WTC11 (cell line): ENCODE measurements at regions of chr11 and their contacts with region 1.

Region 1: GRCh38 chr11:126480410-126481302 is 125.2 kb downstream of the ST3GAL4 start:
- DNase-seq: peak; percentile 77
- ATAC-seq: peak; percentile 80
- H3K4me3 Mint-ChIP-seq: peak overlapping the region; percentile 34; the same call in 1 of the 2 replicates
- H3K27ac Mint-ChIP-seq: peak overlapping the region; percentile 81; the same call in 1 of the 2 replicates
- H3K4me1 Mint-ChIP-seq: peaks cover 11% of the 10 kb centered on the region
- H3K27me3 Mint-ChIP-seq: no peaks in the 10 kb centered on the region
- CTCF ChIP-seq: peak; percentile 92

Region 2: GRCh38 chr11:126355324-126355925 is 125.2 kb before region 1 on chr11 and contains the start of gene ST3GAL4:
- CTCF ChIA-PET with region 1: interaction called, 16 read pairs
- POLR2A ChIA-PET with region 1: no interaction called
- DNase-seq: peak; percentile 87
- ATAC-seq: peak; percentile 88
- H3K4me3 Mint-ChIP-seq: peak within 1 kb of the TSS; percentile 91
- H3K27ac Mint-ChIP-seq: 0 out of 2 replicates have a peak within 1 kb of the TSS, but pooled peaks have one; percentile 53
- H3K4me1 Mint-ChIP-seq: peaks cover 52% of the 10 kb centered on the region
- H3K27me3 Mint-ChIP-seq: no peaks in the 10 kb centered on the region
- CTCF ChIP-seq: no peak
- total RNA-seq, gene ST3GAL4: 12.8 to 17.3 TPM (median 14.3 TPM) in 3 replicates

Region 3: DNA sequence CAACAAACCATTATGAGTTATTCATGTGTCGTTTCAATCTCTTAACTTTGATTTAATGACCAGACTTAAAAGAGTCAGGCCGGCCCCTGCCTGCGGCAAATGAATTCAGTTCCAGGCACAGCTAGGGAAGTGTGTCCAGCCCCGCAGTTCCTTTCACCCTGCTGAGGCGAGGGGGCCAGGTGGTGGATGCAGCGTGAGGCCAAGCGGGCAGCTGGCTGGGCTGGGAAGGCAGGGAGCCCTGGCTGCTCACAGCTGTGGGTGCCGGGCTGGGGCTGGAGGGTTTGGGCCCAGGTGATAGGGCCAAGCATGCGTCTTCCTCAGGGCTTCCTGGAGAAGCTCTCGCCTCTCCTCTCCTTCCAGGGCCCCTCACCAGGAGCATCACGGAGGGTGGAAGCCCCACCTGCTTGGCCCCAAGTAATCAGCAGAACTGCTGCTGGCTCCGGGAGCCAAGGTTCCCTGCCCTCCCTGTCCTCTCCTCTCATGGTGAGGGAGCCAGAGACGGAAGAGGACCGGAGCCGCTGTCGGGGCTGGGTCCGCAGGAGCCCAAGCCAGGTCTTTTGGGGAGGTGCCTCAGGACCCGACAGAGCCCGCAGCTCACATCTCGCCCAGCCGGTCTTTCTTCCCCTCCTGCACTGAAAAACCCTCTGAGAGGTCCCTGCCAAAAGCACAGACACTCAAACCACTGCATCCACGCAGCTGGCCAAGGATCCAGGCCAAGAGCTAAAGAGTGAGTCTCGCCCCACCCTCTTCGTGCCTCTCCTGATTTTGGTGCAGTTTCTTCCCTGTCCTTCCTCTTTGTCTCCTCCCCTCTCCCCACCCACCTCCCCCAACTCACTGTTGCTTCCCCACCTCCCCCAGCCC is 28.2 kb before region 1 on chr11:
- CTCF ChIA-PET with region 1: interaction called, 147 read pairs
- POLR2A ChIA-PET with region 1: no interaction called
- DNase-seq: peak; percentile 20
- ATAC-seq: peak; percentile 50
- H3K4me3 Mint-ChIP-seq: no peak overlapping the region
- H3K27ac Mint-ChIP-seq: no peak overlapping the region
- H3K4me1 Mint-ChIP-seq: no peaks in the 10 kb centered on the region
- H3K27me3 Mint-ChIP-seq: no peaks in the 10 kb centered on the region; the same call in none of the 2 replicates
- CTCF ChIP-seq: no peak

Region 4: DNA sequence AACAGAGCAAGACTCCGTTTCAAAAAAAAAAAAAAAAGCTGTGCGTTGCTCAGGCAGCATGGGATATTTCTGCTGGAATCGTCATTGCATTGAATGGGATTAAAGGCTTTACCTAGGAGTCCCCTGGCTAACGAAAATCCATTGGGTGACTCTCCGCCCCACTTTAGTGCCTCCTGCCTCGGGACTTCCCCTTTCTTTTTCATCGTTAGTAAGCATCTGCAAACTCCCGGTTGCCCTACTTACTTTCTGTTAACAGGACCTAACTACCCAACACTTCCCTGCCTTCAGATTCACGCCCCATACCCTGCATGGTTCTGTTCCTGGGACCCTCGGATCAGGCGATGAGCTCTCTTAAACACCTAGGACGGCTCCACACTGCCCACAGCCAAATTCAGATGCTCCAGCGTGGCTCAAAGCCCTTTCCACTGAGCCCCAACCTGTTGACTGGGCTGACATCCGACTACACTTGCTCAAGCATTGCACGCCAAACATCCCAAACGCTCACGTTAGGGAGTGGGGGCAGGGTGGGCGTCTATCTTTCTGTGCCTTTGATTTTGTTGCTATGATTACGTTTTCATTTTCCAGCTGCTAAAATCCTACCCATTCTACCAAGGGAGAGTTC is 18.6 kb after region 1 on chr11:
- CTCF ChIA-PET with region 1: interaction called, 46 read pairs
- POLR2A ChIA-PET with region 1: interaction called, 3 read pairs
- DNase-seq: no peak
- ATAC-seq: no peak
- H3K4me3 Mint-ChIP-seq: no peak overlapping the region
- H3K27ac Mint-ChIP-seq: no peak overlapping the region
- H3K4me1 Mint-ChIP-seq: peaks cover 69% of the 10 kb centered on the region
- H3K27me3 Mint-ChIP-seq: peaks cover 2% of the 10 kb centered on the region
- CTCF ChIP-seq: no peak

Region 5: GRCh38 chr11:126544108-126545056 is 63.7 kb after region 1 on chr11:
- CTCF ChIA-PET with region 1: interaction called, 15 read pairs
- POLR2A ChIA-PET with region 1: no interaction called
- DNase-seq: peak; percentile 44
- ATAC-seq: peak; percentile 84
- H3K4me3 Mint-ChIP-seq: no peak overlapping the region
- H3K27ac Mint-ChIP-seq: peak overlapping the region; percentile 80
- H3K4me1 Mint-ChIP-seq: peaks cover 44% of the 10 kb centered on the region
- H3K27me3 Mint-ChIP-seq: no peaks in the 10 kb centered on the region
- CTCF ChIP-seq: no peak

Region 6: DNA sequence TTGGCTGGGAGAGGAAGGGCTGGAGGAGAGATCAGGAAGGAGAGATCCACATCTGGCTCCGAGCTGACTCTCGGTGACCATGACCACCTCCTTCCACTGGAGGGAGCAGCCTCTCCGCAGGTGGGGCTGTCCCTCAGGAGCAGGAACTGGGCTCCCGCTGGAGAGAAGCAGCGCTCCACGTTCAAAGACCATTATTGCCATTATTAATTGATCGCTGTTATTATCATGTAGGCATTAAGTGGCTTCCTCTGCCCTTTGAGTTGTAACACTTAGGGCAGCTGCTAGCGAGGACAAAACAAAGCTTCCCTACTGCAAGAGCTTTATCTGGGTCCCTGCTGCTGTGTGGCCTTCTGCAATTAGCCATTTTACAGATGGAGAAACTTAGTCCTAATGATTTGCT is 126.7 kb after region 1 on chr11:
- CTCF ChIA-PET with region 1: interaction called, 18 read pairs
- POLR2A ChIA-PET with region 1: no interaction called
- DNase-seq: peak; percentile 76
- ATAC-seq: peak; percentile 83
- H3K4me3 Mint-ChIP-seq: peak overlapping the region; percentile 42
- H3K27ac Mint-ChIP-seq: no peak overlapping the region
- H3K4me1 Mint-ChIP-seq: peaks cover 40% of the 10 kb centered on the region
- H3K27me3 Mint-ChIP-seq: peaks cover 6% of the 10 kb centered on the region
- CTCF ChIP-seq: peak; percentile 52

Region 7: GRCh38 chr11:126748100-126748791 is 267.6 kb after region 1 on chr11:
- CTCF ChIA-PET with region 1: no interaction called
- POLR2A ChIA-PET with region 1: no interaction called
- DNase-seq: no peak
- ATAC-seq: peak; percentile 46; the same call in 1 of the 2 replicates
- H3K4me3 Mint-ChIP-seq: no peak overlapping the region
- H3K27ac Mint-ChIP-seq: no peak overlapping the region
- H3K4me1 Mint-ChIP-seq: peaks cover 3% of the 10 kb centered on the region
- H3K27me3 Mint-ChIP-seq: no peaks in the 10 kb centered on the region
- CTCF ChIP-seq: no peak